Endothelial cell of umbilical vein (primary cell): ENCODE measurements at regions of chr9 and their contacts with region 1.

Region 1: DNA sequence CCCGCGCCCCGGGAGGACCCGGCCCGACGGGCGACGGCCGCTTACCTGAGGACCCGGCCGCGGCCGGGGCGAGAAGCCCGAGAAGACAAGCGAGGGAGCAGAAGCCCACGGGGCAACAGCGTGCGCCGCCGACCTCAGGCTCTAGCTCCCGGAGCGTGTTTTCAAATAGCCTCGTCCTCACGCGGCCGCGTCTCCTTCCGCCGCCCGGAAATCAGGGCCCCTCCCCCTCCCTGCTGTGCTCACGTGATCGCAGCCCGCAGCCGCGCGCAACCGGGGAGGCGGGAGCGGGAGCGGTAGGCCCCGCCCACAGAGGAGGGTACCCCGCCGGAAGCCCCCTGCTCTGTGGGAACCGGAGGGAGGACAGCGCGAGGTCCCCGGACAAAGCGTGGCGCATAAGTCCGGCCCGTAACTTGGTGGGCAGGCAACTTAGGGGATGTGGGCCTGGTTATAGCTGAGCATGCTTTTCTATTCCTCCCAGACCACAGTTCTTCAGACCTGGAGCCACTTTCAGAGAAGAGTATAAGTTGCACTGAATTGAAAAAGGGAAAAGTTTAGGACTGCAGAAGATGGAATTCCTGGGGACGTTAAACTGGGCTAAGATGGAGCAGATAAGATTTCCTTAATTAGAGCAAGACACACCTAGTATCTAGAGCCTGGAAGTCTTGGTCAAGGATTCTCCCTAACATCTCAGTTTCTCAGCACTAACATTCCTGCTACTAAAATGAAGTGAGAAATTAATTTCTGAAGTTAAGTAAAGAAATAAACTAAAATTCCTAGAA is at the start of gene TEX10:
- DNase-seq: peak; percentile 91
- H3K4me3 ChIP-seq: peak within 1 kb of the TSS; percentile 47 to 89 (median 88)
- H3K27ac ChIP-seq: peak within 1 kb of the TSS; percentile 69
- H3K4me1 ChIP-seq: peaks cover 10% of the 10 kb centered on the region
- H3K27me3 ChIP-seq: no peaks in the 10 kb centered on the region
- CTCF ChIP-seq: no peak
- POLR2A ChIP-seq: peak; percentile 59
- total RNA-seq, gene TEX10: 20.5 and 21.2 TPM in 2 replicates

Region 2: GRCh38 chr9:100379862-100380261 is 26.9 kb after region 1 on chr9:
- CTCF ChIA-PET with region 1: no interaction called
- POLR2A ChIA-PET with region 1: no interaction called
- dilution Hi-C with region 1: no loop called
- intact Hi-C with region 1: no loop called
- DNase-seq: no peak
- H3K4me3 ChIP-seq: no peak overlapping the region
- H3K27ac ChIP-seq: peak overlapping the region; percentile 37
- H3K4me1 ChIP-seq: no peaks in the 10 kb centered on the region
- H3K27me3 ChIP-seq: no peaks in the 10 kb centered on the region
- CTCF ChIP-seq: no peak
- POLR2A ChIP-seq: no peak

Region 3: DNA sequence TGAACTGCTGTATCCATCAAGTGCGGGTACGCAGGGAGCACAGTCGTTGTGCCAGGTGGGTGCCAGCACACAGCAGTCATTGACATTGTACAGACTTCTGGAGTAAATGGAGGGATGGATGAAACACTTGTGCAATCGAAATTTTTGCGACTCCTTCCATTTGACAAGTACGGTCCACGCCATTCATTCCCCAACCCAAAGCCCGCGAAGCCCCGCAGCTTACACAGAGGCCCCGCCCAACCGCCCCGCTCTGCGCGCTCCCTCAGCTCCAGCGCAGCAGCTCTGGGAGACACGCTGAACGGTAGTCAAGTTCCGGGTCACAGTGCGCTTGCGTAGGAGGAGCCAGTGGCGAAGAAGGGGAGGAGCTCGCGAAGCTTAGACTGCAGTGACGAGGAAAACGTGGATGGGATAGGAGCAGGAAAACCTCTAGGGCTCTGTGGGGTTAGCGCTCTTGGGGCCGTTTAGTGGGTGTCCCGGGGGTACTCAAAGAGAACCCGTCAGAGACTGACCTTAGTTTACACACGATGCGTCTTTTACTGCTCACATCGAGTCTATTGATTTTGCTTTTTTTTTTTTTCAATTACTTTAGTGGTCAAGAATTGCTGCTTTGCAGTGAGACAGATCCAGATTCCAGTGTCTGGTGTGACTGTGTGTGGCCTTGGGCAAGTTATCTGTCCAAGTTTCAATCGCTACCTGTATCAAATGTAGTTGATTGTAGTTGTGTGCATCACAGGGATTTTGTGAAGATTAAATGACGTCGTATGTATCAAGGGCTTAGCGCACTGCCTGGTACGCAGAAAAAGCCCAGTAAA is 58.8 kb after region 1 on chr9:
- CTCF ChIA-PET with region 1: interaction called, 4 read pairs
- POLR2A ChIA-PET with region 1: no interaction called
- dilution Hi-C with region 1: no loop called
- intact Hi-C with region 1: loop called (anchors 2 kb)
- DNase-seq: peak; percentile 90
- H3K4me3 ChIP-seq: peak overlapping the region in 2 of 3 experiments; percentile 25 to 57
- H3K27ac ChIP-seq: no peak overlapping the region
- H3K4me1 ChIP-seq: peaks cover 9% of the 10 kb centered on the region
- H3K27me3 ChIP-seq: peaks cover 3 to 8% of the 10 kb centered on the region in 2 experiments
- CTCF ChIP-seq: no peak
- POLR2A ChIP-seq: peak; percentile 75

Region 4: GRCh38 chr9:100437860-100438805 is 85.2 kb after region 1 on chr9:
- CTCF ChIA-PET with region 1: interaction called, 6 read pairs
- POLR2A ChIA-PET with region 1: no interaction called
- dilution Hi-C with region 1: loop called (anchors 25 kb)
- intact Hi-C with region 1: loop called (anchors 1 kb)
- DNase-seq: peak; percentile 83
- H3K4me3 ChIP-seq: no peak overlapping the region
- H3K27ac ChIP-seq: no peak overlapping the region
- H3K4me1 ChIP-seq: no peaks in the 10 kb centered on the region
- H3K27me3 ChIP-seq: no peaks in the 10 kb centered on the region
- CTCF ChIP-seq: peak; percentile 75 to 87
- POLR2A ChIP-seq: no peak

Region 5: DNA sequence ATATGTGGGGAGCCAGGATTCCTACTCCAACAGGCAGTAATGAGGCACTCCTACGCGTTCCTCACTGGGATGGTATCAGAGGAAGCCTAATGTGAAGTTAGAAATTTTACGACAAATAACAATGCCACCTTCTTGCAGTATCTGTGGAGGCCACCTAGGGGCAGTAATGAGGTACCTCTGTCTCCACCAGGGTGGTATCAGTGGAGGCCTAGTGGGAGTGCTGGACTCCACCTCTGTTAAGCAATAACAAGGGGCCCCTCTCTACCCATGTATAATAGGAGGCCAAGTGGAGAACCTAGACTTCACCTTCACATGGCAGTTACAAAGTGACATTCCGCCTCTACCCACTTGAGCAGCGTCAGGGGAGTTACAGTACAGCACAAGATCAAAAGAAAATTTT is 823.5 kb after region 1 on chr9:
- CTCF ChIA-PET with region 1: no interaction called
- POLR2A ChIA-PET with region 1: no interaction called
- dilution Hi-C with region 1: no loop called
- intact Hi-C with region 1: no loop called
- DNase-seq: no peak
- H3K4me3 ChIP-seq: no peak overlapping the region
- H3K27ac ChIP-seq: no peak overlapping the region
- H3K4me1 ChIP-seq: no peaks in the 10 kb centered on the region
- H3K27me3 ChIP-seq: no peaks in the 10 kb centered on the region
- CTCF ChIP-seq: peak in 1 of 2 donors; percentile 17
- POLR2A ChIP-seq: no peak